ENCODE measurements at regions of chr1 and their contacts with region 1.

Region 1: DNA sequence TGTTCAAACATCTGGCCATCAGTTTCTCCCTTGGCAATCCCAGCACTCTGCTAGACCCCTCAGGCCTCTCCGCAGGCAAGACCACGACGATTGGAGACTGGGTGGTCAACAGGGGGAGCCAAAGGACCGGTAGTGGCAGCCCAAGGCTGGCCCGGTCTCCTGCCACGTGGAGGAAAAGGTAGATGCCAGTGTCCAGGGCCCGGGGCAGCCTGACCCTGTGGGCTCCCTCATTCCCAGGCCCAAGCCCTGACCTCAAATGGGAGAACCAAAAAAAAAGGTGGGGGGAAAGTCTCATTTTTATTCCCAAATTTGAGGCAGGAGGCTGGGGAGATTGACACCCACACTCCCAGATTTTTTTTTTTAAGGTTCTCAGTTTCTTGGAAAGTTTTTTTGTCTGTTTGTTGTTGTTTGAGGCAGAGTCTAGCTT is 24.8 kb downstream of the S100A6 start:
- DNase-seq: peak; percentile 90 to 93
- H3K4me3 ChIP-seq: no peak overlapping the region
- H3K4me3 Mint-ChIP-seq: no peak overlapping the region
- H3K27ac Mint-ChIP-seq: peak overlapping the region; percentile 74
- H3K4me1 ChIP-seq: peaks cover 48% of the 10 kb centered on the region
- H3K4me1 Mint-ChIP-seq: peaks cover 50% of the 10 kb centered on the region
- H3K27me3 ChIP-seq: no peaks in the 10 kb centered on the region
- H3K27me3 Mint-ChIP-seq: no peaks in the 10 kb centered on the region
- CTCF ChIP-seq: peak; percentile 93 to 94

Region 2: DNA sequence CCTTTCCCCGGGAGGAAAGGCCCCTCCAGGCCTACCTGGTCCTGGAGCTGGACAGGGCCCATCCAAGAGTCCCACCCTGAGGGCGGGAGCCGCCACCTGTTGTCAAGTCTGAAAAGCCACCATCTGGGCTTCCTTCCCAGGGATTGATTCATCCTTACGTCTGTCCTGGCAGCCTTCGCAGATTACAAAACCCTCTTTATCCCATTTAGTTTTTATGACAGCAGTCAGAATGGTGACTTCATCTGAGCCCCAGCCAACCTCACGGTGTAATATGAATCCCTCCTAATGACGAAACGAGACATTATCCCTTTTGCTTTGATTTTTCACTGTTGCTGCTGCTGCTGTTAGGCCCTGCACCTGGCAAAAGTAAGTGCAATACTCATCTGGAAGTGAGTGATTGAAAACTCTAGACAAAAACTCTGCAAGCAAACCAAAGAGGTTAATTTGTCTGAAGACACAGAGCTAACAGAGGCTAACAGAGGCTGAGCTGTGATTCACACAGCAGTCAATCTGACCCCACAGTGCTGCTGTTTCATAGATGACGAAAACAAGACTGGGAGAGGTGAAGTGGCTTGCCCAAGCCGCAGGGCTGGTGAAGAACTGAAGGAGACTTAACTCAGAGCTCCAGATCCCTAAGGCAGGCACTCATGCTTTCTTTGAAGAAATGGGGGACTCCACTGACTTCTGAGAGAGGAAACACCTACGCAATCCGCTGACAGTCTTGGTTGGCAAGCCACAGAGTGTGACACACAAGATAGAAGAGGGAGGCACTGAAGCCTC is 20.5 kb before region 1 on chr1:
- CTCF ChIA-PET with region 1: no interaction called
- POLR2A ChIA-PET with region 1: no interaction called
- intact Hi-C with region 1: no loop called
- DNase-seq: no peak
- H3K4me3 ChIP-seq: no peak overlapping the region
- H3K4me3 Mint-ChIP-seq: no peak overlapping the region
- H3K27ac Mint-ChIP-seq: no peak overlapping the region
- H3K4me1 ChIP-seq: no peaks in the 10 kb centered on the region
- H3K4me1 Mint-ChIP-seq: no peaks in the 10 kb centered on the region
- H3K27me3 ChIP-seq: no peaks in the 10 kb centered on the region; the same call in 1 of the 2 replicates
- H3K27me3 Mint-ChIP-seq: peaks cover 11% of the 10 kb centered on the region
- CTCF ChIP-seq: no peak

Region 3: DNA sequence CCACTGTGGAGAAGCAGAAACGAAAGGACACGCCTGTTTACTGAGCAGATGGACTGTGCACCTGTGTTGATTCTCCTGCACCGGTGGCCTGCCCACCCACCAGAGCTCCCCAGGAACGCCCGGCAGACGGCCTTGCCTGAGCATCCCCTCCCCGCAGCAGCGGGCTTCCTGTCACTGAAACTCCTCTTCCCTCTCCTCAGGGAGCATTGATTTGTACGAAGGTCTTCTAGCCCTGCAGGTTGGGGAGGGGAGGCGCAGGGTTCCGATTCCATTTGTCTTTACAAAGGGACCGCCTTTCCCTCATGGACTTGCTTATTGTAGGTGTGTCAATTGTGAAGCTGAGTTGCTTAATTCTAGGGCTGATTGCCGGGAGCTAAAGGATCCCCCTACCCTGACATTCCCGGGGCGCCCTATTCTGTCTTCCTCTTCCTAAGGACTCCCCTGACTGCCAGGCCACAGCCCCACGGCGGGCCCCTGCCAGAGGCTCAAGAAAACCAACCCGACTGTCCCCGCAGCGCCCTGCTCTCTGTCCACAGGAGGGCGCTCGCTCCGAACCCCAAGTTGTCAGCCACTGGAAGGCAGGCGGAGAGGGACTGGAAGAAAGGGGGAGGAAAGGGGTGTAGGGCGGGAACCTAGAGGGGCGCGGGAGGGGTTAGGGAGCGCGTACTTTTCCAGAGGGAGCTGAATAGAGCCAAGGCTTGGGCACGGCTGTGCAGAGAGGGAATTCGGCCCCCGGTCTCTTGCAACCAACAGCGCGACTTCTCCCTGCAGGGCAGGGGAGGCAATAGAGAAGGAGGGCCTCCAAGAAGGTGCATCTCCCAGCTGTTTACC is 22.0 kb after region 1 on chr1:
- CTCF ChIA-PET with region 1: interaction called, 9 read pairs
- POLR2A ChIA-PET with region 1: interaction called, 3 read pairs
- intact Hi-C with region 1: loop called (anchors 1 kb)
- DNase-seq: peak; percentile 77 to 84
- H3K4me3 ChIP-seq: peak overlapping the region; percentile 21
- H3K4me3 Mint-ChIP-seq: peak overlapping the region; percentile 95
- H3K27ac Mint-ChIP-seq: peak overlapping the region; percentile 72
- H3K4me1 ChIP-seq: peaks cover 37% of the 10 kb centered on the region
- H3K4me1 Mint-ChIP-seq: peaks cover 31% of the 10 kb centered on the region
- H3K27me3 ChIP-seq: no peaks in the 10 kb centered on the region
- H3K27me3 Mint-ChIP-seq: no peaks in the 10 kb centered on the region
- CTCF ChIP-seq: peak; percentile 74 to 91

Region 4: DNA sequence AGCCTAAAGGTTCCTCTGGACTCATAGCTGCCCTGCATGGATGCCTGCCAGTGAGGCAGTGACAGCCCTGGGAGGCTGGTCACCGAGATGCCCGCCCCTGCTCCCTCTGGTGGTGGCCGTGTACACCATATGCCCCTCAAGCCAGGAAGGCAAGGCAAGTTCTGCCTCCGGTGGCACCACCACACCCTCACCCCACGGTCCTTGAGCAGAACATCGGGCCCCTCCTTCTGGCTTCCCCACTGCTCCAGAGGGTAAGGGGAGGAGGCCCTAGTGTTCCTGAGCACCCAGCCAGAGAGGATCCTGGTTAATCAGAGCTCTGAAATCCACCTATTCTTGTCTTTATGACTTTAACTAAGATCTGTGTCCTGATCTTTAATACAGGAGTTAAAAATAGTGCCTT is 106.7 kb after region 1 on chr1:
- CTCF ChIA-PET with region 1: interaction called, 13 read pairs
- POLR2A ChIA-PET with region 1: interaction called, 5 read pairs
- intact Hi-C with region 1: loop called (anchors 1 kb)
- DNase-seq: peak; percentile 88 to 91
- H3K4me3 ChIP-seq: no peak overlapping the region
- H3K4me3 Mint-ChIP-seq: peak overlapping the region; percentile 74
- H3K27ac Mint-ChIP-seq: peak overlapping the region; percentile 96
- H3K4me1 ChIP-seq: peaks cover 34% of the 10 kb centered on the region
- H3K4me1 Mint-ChIP-seq: peaks cover 32% of the 10 kb centered on the region
- H3K27me3 ChIP-seq: no peaks in the 10 kb centered on the region
- H3K27me3 Mint-ChIP-seq: no peaks in the 10 kb centered on the region
- CTCF ChIP-seq: peak; percentile 80 to 84

Region 5: DNA sequence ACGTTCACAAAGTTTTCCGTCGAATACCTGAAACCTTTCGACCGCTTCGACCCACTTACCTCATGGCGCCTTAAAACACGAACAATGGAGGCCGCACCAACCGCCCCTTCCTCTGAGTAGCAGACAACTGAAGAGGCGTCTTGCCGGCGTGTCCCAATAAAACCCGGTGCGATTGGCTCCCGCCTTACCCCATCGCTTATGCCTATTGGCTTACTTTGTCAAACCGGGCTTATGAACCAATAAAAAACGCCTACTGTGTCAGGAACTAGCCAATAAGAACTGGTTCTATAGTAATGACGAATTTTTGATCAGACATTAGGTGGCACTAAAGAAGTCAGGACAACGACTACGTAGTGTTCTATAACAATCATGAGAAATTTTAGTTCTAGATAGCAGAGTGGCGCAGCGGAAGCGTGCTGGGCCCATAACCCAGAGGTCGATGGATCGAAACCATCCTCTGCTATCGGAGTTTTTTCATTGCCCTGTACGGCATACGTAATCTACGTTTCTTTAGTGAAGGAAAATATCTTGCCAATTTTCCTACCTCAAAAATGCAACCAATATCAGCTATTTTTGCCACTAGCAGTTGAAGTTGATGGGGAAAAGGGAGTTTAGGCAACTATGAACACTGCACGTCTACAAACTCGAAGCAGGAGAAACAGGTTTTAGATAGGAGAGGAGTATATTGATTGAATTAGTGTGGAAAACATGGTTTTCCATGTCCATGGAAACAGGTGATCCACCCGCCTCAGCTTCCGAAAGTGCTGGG is 160.0 kb after region 1 on chr1 and contains the start of gene ILF2:
- CTCF ChIA-PET with region 1: interaction called, 3 read pairs
- POLR2A ChIA-PET with region 1: no interaction called
- intact Hi-C with region 1: loop called (anchors 1 kb)
- DNase-seq: peak; percentile 97 to 99
- H3K4me3 ChIP-seq: peak within 1 kb of the TSS; percentile 85
- H3K4me3 Mint-ChIP-seq: no peak within 1 kb of the TSS
- H3K27ac Mint-ChIP-seq: no peak within 1 kb of the TSS
- H3K4me1 ChIP-seq: peaks cover 4% of the 10 kb centered on the region; the same call in 1 of the 2 replicates
- H3K4me1 Mint-ChIP-seq: peaks cover 6% of the 10 kb centered on the region
- H3K27me3 ChIP-seq: no peaks in the 10 kb centered on the region
- H3K27me3 Mint-ChIP-seq: no peaks in the 10 kb centered on the region
- CTCF ChIP-seq: no peak
- total RNA-seq, gene ILF2: 287 and 289 TPM in 2 replicates

Region 6: GRCh38 chr1:153775458-153776327 is 264.7 kb after region 1 on chr1:
- CTCF ChIA-PET with region 1: interaction called, 3 read pairs
- POLR2A ChIA-PET with region 1: no interaction called
- intact Hi-C with region 1: loop called (anchors 10 kb)
- DNase-seq: peak; percentile 86 to 87
- H3K4me3 ChIP-seq: peak overlapping the region; percentile 55
- H3K4me3 Mint-ChIP-seq: peak overlapping the region; percentile 82
- H3K27ac Mint-ChIP-seq: peak overlapping the region; percentile 59
- H3K4me1 ChIP-seq: peaks cover 11% of the 10 kb centered on the region
- H3K4me1 Mint-ChIP-seq: no peaks in the 10 kb centered on the region
- H3K27me3 ChIP-seq: no peaks in the 10 kb centered on the region
- H3K27me3 Mint-ChIP-seq: no peaks in the 10 kb centered on the region
- CTCF ChIP-seq: no peak

Measured in Caco-2 (cell line).